Activated T-helper 1 cell treated with anti-CD3 and anti-CD28 coated beads, Interleukin-12 subunit alpha, Interleukin-12 subunit beta, Interleukin-2, Interleukin-4 antibody, amounts not matched to agents 30 ng/mL and 10 ng/mL and 1 ng/mL, durations not matched to agents 14 hours and 24 hours and 36 hours (primary cell): ENCODE measurements at regions of chr16 and their contacts with region 1.

Region 1: DNA sequence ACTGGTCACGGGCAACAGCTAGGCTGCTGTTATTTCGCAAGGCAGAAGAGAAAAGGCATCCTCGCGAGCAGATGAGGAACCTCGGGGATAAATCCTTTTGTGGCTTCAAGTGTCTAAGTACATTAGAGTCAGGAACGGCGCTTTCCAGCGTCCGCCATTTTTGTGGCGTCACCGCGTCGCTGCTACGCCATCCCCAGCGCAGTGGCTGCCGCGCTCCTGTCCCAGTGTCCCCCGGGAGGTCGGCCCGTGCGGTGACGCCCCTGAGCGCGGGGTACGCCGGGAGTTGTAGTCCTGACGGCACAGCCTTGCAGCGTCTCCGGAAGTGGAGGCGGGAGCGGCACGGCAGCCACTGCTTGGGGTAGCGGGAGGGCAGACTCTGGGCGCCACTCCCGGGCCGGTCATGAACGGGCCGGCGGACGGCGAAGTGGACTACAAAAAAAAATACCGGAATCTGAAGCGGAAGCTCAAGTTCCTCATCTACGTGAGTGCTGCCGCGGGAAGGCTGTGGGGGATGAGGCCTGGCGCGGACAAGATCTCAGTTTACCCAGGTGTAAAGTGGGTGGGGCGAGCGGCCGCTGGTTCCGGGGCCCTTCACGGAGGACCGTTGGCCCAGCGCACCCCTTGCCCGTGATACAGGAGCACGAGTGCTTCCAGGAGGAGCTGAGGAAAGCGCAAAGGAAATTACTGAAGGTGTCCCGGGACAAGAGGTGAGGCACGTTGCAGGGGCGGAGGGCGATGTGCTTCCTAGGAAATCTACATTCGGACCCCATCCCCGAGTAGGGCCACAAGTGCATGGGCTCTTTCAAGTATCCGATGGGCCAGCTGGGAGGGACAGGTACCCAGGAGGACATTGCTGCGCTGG is at the start of gene INO80E:
- DNase-seq: peak; percentile 99
- H3K4me3 Mint-ChIP-seq: peak within 1 kb of the TSS; percentile 98
- H3K27ac Mint-ChIP-seq: peak within 1 kb of the TSS; percentile 96
- H3K4me1 Mint-ChIP-seq: peaks cover 39% of the 10 kb centered on the region
- H3K27me3 Mint-ChIP-seq: no peaks in the 10 kb centered on the region
- total RNA-seq, gene INO80E: 128 and 137 TPM in 2 replicates

Region 2: DNA sequence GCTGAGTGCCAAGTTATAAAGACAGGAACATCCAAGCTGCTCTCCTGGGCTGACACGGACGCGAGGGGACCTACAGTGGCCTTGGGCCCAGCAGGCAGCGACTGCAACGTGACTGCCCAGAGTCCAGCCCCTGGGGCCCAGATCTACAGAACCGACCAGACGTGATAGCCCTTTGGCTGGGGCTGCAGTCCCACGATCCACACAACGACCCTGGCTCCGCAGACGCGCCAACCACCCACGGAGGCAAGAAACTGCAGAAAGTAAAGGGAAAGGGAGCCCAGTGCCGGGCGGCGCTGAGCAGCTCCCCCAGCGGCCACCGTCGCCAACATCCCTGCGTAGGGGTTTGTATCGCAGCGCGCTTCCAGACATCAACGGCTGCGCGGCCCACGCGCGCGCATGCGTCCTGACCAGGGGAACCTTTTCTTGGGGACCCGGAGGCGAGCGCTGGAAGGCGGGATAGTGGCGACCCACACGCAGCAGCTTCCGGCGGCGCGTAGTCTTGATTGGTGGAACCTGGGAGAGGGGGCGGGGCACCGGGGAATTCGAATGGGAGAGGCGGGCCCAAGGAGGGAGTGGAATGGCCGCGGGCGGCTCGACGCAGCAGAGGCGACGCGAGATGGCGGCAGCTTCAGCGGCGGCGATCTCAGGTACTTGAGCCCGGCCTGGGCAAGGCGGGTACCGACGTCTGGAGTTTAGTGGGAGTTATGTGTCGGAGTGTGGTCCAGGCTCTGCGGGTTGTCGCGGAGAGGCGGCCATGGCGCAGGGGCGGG is 205.8 kb before region 1 on chr16 and contains the start of gene KIF22:
- intact Hi-C with region 1: loop called (anchors 1 kb)
- DNase-seq: peak; percentile 100
- H3K4me3 Mint-ChIP-seq: peak within 1 kb of the TSS; percentile 99
- H3K27ac Mint-ChIP-seq: peak within 1 kb of the TSS; percentile 97
- H3K4me1 Mint-ChIP-seq: peaks cover 44% of the 10 kb centered on the region
- H3K27me3 Mint-ChIP-seq: no peaks in the 10 kb centered on the region
- total RNA-seq, gene KIF22: 134 and 140 TPM in 2 replicates

Region 3: DNA sequence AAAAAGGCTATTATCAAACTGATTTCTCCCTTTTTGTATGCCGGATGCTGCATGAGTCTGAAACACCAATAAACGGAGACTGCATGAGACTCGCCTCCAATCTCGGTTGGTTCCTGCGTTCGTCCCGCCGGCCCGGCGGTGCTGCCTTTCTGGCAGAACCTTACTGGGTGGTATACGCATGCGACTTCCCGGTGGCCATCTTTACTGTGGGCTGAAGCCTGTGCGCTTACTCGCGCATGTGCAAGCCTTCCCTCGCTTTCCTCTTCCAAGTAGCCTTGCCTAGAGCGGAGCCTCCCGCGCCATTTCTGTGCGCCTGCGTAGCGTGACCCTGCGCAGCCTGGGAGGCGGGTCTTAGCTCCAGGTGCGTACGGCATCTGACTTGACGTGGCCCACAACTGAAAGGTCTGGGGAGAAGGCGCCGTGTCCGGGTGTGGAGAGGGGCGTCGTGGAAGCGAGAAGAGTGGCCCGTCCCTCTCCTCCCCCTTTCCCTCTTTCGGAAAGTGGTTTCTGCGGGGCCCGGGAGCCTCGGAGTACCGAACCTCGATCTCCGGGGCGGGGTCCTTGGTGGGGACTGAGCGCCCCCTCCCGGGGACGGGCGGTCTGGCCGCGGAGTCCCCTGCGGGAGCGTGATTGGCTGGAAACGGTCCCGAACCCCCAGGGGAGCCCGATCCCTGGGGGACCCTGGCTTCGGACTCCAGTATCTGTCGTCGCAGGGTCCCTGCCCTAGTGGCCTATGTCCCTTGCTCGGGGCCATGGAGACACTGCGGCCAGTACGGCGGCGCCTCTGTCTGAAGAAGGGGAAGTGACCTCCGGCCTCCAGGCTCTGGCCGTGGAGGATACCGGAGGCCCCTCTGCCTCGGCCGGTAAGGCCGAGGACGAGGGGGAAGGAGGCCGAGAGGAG is 180.1 kb before region 1 on chr16 and contains the start of gene PAGR1:
- intact Hi-C with region 1: loop called (anchors 1 kb)
- DNase-seq: peak; percentile 99
- H3K4me3 Mint-ChIP-seq: peak within 1 kb of the TSS; percentile 94
- H3K27ac Mint-ChIP-seq: peak within 1 kb of the TSS; percentile 98
- H3K4me1 Mint-ChIP-seq: peaks cover 48% of the 10 kb centered on the region
- H3K27me3 Mint-ChIP-seq: no peaks in the 10 kb centered on the region
- total RNA-seq, gene PAGR1: 29.2 and 30.8 TPM in 2 replicates

Region 4: GRCh38 chr16:29950806-29951461 is 45.2 kb before region 1 on chr16:
- intact Hi-C with region 1: no loop called
- DNase-seq: no peak
- H3K4me3 Mint-ChIP-seq: no peak overlapping the region
- H3K27ac Mint-ChIP-seq: no peak overlapping the region
- H3K4me1 Mint-ChIP-seq: no peaks in the 10 kb centered on the region
- H3K27me3 Mint-ChIP-seq: peaks cover 12% of the 10 kb centered on the region

Region 5: GRCh38 chr16:29961479-29962343 is 34.4 kb before region 1 on chr16 and contains the start of gene TMEM219:
- intact Hi-C with region 1: loop called (anchors 1 kb)
- DNase-seq: peak; percentile 95
- H3K4me3 Mint-ChIP-seq: peak within 1 kb of the TSS; percentile 86
- H3K27ac Mint-ChIP-seq: peak within 1 kb of the TSS; percentile 83
- H3K4me1 Mint-ChIP-seq: peaks cover 24% of the 10 kb centered on the region
- H3K27me3 Mint-ChIP-seq: no peaks in the 10 kb centered on the region
- total RNA-seq, gene TMEM219: 41.5 and 43.7 TPM in 2 replicates

Region 6: DNA sequence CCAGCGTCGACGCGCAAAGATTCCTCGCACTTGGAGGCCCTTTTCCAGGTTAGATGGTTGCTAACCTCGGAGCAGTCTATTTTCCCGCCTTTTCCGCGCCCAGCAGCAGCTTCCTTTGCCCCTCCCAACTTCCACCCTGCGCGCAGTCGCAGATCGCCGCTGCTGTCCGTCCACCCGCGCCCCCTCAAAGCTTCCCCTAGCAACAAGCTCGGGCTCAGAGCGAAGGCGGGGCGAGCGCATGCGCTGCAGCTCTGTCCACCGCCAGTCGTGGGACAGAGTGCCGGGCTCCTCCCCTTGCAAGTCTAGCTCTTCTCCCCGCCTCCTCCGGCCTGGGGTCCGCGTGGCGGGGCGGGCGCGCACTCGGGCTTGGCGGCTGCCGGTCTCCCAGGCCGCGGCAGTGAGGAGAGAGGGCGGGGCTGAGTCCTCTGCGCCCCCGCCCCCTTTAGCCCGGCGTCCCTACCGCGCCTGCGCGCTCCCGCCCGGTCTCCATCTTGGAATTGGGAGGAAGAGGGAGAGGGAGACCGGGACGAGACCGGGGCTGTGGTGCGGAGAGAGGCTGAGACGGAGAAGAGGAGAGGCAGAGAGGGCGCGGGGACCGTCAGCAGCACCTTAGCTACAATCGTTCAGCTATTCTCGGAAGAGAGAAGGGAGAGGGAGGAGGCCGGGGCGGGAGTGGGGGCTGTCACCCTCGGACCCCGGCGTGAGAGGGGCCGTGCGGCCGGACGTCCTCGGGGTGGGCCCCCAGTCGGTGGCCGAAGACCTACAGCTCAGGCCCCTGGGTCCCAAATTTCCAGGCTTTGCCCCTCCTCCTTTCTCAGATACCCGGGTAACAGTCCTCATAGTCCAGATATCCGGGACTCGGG is 22.5 kb before region 1 on chr16 and contains the start of gene TAOK2:
- intact Hi-C with region 1: loop called (anchors 1 kb)
- DNase-seq: peak; percentile 97
- H3K4me3 Mint-ChIP-seq: peak within 1 kb of the TSS; percentile 92
- H3K27ac Mint-ChIP-seq: peak within 1 kb of the TSS; percentile 91
- H3K4me1 Mint-ChIP-seq: peaks cover 36% of the 10 kb centered on the region
- H3K27me3 Mint-ChIP-seq: no peaks in the 10 kb centered on the region
- total RNA-seq, gene TAOK2: 38.5 and 39.7 TPM in 2 replicates

Region 7: DNA sequence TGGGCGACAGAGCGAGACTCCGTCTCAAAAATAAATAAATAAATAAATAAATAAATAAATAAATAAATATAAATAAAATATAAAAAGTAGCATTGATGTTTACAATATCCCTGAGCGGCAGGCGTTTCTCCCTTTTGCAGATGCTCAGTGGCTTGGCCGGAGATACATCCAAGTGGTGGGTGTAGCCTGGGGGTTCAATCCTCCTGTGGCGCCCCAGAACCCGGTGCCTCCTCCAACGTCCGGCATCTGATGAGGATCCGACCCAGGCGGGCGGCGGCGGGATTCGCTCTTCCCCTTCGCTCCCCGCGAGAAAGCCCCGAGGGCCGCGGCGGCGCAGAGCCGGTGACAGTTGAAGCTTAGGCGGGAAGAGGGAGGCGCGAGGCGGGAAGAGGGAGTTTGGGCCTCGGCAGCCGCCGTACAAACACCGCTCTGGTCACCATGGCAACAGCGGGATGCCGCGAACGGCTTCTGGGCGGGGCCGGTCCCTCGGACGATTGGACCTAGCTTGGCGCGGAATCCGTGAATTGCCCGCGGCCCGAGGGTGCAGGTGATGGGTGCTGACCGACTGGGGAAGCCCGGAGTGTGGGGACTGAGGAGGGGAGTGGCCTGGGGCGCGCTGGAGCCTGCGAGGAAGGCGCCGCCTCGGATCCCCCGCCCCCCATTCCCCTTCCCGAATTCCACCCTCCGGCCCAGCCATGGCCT is 56.7 kb after region 1 on chr16:
- intact Hi-C with region 1: loop called (anchors 1 kb)
- DNase-seq: peak; percentile 89
- H3K4me3 Mint-ChIP-seq: peak overlapping the region; percentile 87
- H3K27ac Mint-ChIP-seq: peak overlapping the region; percentile 82
- H3K4me1 Mint-ChIP-seq: peaks cover 28% of the 10 kb centered on the region
- H3K27me3 Mint-ChIP-seq: no peaks in the 10 kb centered on the region

Region 8: DNA sequence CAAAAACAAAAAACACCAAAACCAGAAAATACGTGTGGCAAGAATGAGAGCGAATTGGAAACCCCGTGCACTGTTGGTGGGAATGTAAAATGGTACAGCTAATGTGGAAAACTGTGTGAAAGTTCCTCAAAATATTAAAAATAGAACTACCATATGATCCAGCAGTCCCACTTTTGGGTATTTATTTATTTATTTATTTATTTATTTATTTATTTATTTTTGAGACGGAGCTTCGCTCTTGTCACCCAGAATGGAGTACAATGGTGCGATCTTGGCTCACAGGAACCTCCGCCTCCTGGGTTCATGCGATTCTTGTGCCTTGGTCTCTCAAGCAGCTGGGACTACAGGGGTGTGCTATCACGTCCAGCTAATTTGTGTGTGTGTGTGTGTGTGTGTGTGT is 156.4 kb after region 1 on chr16:
- intact Hi-C with region 1: no loop called
- DNase-seq: no peak
- H3K4me3 Mint-ChIP-seq: no peak overlapping the region
- H3K27ac Mint-ChIP-seq: no peak overlapping the region
- H3K4me1 Mint-ChIP-seq: no peaks in the 10 kb centered on the region
- H3K27me3 Mint-ChIP-seq: no peaks in the 10 kb centered on the region

Region 9: DNA sequence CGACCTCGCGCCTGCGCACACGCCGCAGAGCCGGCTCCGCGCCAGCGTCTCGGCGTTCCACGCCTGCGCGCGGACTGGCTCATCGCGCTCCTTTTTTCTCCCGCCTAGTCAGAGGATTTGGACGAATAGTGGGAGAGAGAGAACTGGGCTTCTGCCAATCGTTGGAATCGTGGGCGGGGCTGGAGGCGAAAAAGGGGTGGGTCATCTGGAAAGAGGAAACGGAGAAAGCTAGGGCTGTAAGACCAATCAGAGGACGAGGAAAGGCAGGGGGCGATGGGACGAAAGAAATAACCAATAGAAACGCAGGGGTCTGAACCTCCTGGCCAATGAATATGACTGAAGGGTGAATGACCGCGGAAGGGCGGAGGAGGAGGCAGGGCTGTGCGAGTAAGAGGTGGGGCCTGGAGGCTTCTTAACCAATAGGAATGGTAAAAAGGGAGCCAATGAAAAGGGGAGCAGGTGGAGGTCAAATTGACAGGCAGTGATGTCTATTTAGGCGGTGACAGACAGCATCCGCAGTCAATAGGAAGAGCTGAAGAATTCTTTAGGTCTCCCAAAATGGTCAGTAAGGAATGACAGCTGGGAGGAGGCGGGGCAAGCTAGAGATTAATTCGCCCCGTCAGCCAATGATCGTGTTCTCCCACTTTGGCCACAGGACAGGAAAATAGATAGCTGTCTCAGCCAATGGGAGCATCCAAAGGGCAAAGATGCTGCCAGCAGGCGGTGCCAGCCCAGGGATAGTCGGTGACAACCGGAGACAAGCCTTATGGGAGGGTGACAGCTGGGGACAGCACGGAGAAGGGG is 374.5 kb after region 1 on chr16 and contains the start of gene TBC1D10B:
- intact Hi-C with region 1: loop called (anchors 10 kb)
- DNase-seq: peak; percentile 99
- H3K4me3 Mint-ChIP-seq: peak within 1 kb of the TSS; percentile 94
- H3K27ac Mint-ChIP-seq: peak within 1 kb of the TSS; percentile 89
- H3K4me1 Mint-ChIP-seq: peaks cover 41% of the 10 kb centered on the region
- H3K27me3 Mint-ChIP-seq: no peaks in the 10 kb centered on the region
- total RNA-seq, gene TBC1D10B: 68.9 and 73.6 TPM in 2 replicates